Panc1 (cell line): ENCODE measurements at regions of chr11 and their contacts with region 1.

Region 1: GRCh38 chr11:65711785-65712632 is at the start of gene KAT5:
- DNase-seq: peak; percentile 97
- ATAC-seq: peak; percentile 93
- H3K4me3 ChIP-seq: peak within 1 kb of the TSS; percentile 59 to 84
- H3K27ac ChIP-seq: peak within 1 kb of the TSS; percentile 97
- H3K4me1 ChIP-seq: peaks cover 12% of the 10 kb centered on the region
- H3K27me3 ChIP-seq: no peaks in the 10 kb centered on the region
- CTCF ChIP-seq: peak; percentile 100
- total RNA-seq, gene KAT5: 84.2 TPM

Region 2: GRCh38 chr11:65730484-65730883 is 18.5 kb after region 1 on chr11:
- CTCF ChIA-PET with region 1: interaction called, 11 read pairs
- POLR2A ChIA-PET with region 1: no interaction called
- in situ Hi-C with region 1: no loop called
- intact Hi-C with region 1: no loop called
- DNase-seq: no peak
- ATAC-seq: no peak
- H3K4me3 ChIP-seq: no peak overlapping the region
- H3K27ac ChIP-seq: no peak overlapping the region
- H3K4me1 ChIP-seq: no peaks in the 10 kb centered on the region
- H3K27me3 ChIP-seq: no peaks in the 10 kb centered on the region
- CTCF ChIP-seq: no peak

Region 3: GRCh38 chr11:65817835-65818742 is 106.1 kb after region 1 on chr11:
- CTCF ChIA-PET with region 1: interaction called, 10 read pairs
- POLR2A ChIA-PET with region 1: interaction called, 3 read pairs
- in situ Hi-C with region 1: no loop called
- intact Hi-C with region 1: loop called (anchors 5 kb)
- DNase-seq: peak; percentile 42
- ATAC-seq: peak; percentile 96
- H3K4me3 ChIP-seq: peak overlapping the region; percentile 64 to 77
- H3K27ac ChIP-seq: peak overlapping the region; percentile 80
- H3K4me1 ChIP-seq: 0 out of 2 replicates have a peak, but pooled peaks cover 3% of the 10 kb centered on the region
- H3K27me3 ChIP-seq: no peaks in the 10 kb centered on the region
- CTCF ChIP-seq: peak; percentile 100

Region 4: DNA sequence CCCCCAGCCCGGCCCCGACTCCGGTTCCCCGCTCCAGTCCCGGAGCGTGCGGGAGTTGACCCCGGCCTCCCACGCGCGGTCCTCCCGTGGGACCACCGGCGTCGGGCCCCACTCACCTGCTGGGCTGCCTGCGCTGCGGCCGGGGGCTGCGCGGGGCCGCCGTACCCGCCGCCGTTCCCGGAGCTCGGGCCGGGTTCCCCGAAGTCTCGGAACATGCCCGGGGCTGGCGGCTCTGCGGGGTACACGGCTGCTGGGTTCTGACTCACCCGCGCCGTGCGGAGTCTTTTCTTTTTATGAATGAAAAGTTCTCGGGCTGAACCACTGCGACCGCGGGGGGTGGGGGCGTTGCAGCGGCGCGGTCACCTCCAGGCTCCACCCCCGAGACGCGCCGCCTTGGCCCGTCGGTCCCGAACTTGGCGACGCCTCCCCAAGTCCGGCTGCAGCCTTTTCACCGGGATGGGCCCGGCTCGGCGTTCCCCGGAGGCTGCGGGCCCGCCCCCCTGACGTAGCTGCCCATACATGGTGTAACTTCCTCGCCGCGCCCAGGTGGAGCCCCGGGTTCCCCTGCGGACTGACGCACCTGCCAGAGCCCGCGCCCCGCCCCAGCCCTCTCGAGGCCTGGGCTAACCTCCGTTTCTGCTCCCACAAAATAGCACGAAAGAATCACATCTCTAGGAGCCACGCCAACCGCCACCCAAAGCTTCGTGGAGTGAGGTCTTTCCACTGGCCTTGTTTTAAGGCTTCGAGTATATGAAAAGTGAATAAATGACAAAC is 188.3 kb after region 1 on chr11 and contains the start of gene FOSL1:
- CTCF ChIA-PET with region 1: no interaction called
- POLR2A ChIA-PET with region 1: interaction called, 21 read pairs
- in situ Hi-C with region 1: no loop called
- intact Hi-C with region 1: no loop called
- DNase-seq: no peak
- ATAC-seq: peak; percentile 69
- H3K4me3 ChIP-seq: peak within 1 kb of the TSS; percentile 82 to 89
- H3K27ac ChIP-seq: peak within 1 kb of the TSS; percentile 99
- H3K4me1 ChIP-seq: peaks cover 58% of the 10 kb centered on the region
- H3K27me3 ChIP-seq: no peaks in the 10 kb centered on the region
- CTCF ChIP-seq: no peak
- total RNA-seq, gene FOSL1: 186 TPM